HEK293 (cell line): ENCODE measurements at regions of chr15 and their contacts with region 1.

Region 1: GRCh38 chr15:89656116-89656815 is 999 bp upstream of the KIF7 start:
- H3K4me3 ChIP-seq: no peak overlapping the region
- H3K27ac ChIP-seq: no peak overlapping the region
- H3K4me1 ChIP-seq: peaks cover 8% of the 10 kb centered on the region; the same call in 1 of the 2 replicates
- CTCF ChIP-seq: no peak

Region 2: DNA sequence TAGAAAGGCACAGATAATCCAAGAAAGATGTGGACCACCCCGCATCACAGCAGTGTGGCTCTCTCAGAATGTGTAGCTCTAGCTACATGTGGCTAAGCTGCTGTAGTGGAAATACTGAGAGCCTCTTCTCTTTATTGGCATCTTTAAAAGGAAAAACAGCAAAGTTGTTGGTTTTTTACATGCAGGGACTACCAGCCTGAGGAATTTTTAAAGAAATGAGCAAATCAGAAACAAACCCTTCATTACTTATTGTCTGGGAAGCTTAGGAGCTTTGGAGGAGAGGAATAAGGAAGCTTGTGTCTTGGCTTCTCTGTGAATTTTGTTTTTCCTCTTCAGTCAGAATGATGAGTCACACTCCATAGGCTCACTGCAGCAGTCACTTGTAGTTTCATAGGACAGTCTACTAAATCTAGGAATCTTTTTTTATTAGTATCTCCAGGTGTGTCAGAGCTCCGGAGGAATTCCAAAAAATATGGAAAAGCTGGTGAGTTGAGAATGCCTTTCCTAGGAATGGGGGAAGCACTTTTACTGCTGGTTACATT is 349.1 kb before region 1 on chr15:
- CTCF ChIA-PET with region 1: no interaction called
- POLR2A ChIA-PET with region 1: no interaction called
- H3K4me3 ChIP-seq: no peak overlapping the region
- H3K27ac ChIP-seq: no peak overlapping the region
- H3K4me1 ChIP-seq: no peaks in the 10 kb centered on the region
- CTCF ChIP-seq: no peak

Region 3: DNA sequence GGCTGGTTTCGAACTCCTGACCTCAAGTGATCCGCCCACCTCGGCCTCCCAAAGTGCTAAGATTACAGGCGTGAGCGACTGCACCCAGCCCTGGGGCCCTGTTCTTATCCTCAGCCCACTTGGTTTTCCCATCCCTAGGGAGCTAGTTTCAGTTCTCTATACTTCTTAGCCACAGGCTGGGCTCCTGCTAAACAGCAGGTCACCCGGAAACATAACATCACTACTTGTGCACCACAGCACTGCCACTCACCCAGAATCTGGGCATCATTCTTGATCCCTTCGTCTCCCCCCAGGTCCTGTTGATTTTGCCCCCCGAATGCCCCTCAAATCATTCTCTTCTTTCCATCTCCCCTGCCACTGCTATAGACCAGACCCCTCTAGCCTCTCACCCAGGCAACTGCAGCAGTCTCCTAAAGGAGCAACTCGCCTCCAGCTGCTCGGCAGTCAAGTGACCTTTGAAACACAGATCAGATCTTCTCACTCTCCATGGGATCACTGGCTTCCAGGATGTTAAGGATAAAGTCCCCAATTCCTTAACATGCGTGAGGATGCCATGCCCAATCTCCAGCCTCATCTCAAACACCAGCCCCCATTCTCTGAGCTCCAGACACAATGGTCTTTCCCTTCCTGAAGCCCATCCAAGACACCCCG is 243.2 kb after region 1 on chr15:
- CTCF ChIA-PET with region 1: no interaction called
- POLR2A ChIA-PET with region 1: interaction called, 10 read pairs
- H3K4me3 ChIP-seq: no peak overlapping the region
- H3K27ac ChIP-seq: no peak overlapping the region
- H3K4me1 ChIP-seq: no peaks in the 10 kb centered on the region
- CTCF ChIP-seq: no peak